Psoas muscle (tissue), 8 donors: ENCODE measurements at regions of chr16 and their contacts with region 1.

Region 1: GRCh38 chr16:48542020-48542473 is 67.9 kb downstream of the N4BP1 start:
- DNase-seq: peak; percentile 46 to 79
- ATAC-seq: peak; percentile 71 to 88 (median 81)
- H3K4me3 ChIP-seq: no peak overlapping the region
- H3K27ac ChIP-seq: peak overlapping the region; percentile 41
- H3K4me1 ChIP-seq: peaks cover 41% of the 10 kb centered on the region
- H3K27me3 ChIP-seq: no peaks in the 10 kb centered on the region
- CTCF ChIP-seq: peak; percentile 69

Region 2: GRCh38 chr16:48353565-48354163 is 188.4 kb before region 1 on chr16:
- intact Hi-C with region 1: loop called (anchors 2 kb)
- DNase-seq: no peak
- ATAC-seq: peak; percentile 75 to 87 (median 76)
- H3K4me3 ChIP-seq: no peak overlapping the region
- H3K27ac ChIP-seq: peak overlapping the region; percentile 58
- H3K4me1 ChIP-seq: peaks cover 14% of the 10 kb centered on the region
- H3K27me3 ChIP-seq: no peaks in the 10 kb centered on the region
- CTCF ChIP-seq: peak; percentile 94